ENCODE measurements at regions of chr7 and their contacts with region 1.

Region 1: GRCh38 chr7:33685981-33686683 is 219.2 kb upstream of the BMPER start:
- DNase-seq: no peak
- H3K4me3 ChIP-seq: no peak overlapping the region
- H3K27ac ChIP-seq: no peak overlapping the region
- H3K4me1 ChIP-seq: no peaks in the 10 kb centered on the region
- H3K27me3 ChIP-seq: no peaks in the 10 kb centered on the region
- CTCF ChIP-seq: no peak; the same call in 1 of the 2 replicates

Region 2: GRCh38 chr7:33143996-33144718 is 542.0 kb before region 1 on chr7:
- CTCF ChIA-PET with region 1: no interaction called
- POLR2A ChIA-PET with region 1: no interaction called
- intact Hi-C with region 1: no loop called
- DNase-seq: no peak
- H3K4me3 ChIP-seq: no peak overlapping the region
- H3K27ac ChIP-seq: no peak overlapping the region
- H3K4me1 ChIP-seq: no peaks in the 10 kb centered on the region
- H3K27me3 ChIP-seq: no peaks in the 10 kb centered on the region
- CTCF ChIP-seq: no peak

Region 3: GRCh38 chr7:33509206-33509605 is 176.9 kb before region 1 on chr7:
- CTCF ChIA-PET with region 1: interaction called, 11 read pairs
- POLR2A ChIA-PET with region 1: no interaction called
- intact Hi-C with region 1: no loop called
- DNase-seq: no peak
- H3K4me3 ChIP-seq: no peak overlapping the region
- H3K27ac ChIP-seq: no peak overlapping the region
- H3K4me1 ChIP-seq: no peaks in the 10 kb centered on the region
- H3K27me3 ChIP-seq: no peaks in the 10 kb centered on the region
- CTCF ChIP-seq: no peak

Region 4: GRCh38 chr7:33716581-33717477 is 30.7 kb after region 1 on chr7:
- CTCF ChIA-PET with region 1: no interaction called
- POLR2A ChIA-PET with region 1: no interaction called
- intact Hi-C with region 1: no loop called
- DNase-seq: peak; percentile 61
- H3K4me3 ChIP-seq: no peak overlapping the region
- H3K27ac ChIP-seq: no peak overlapping the region
- H3K4me1 ChIP-seq: peaks cover 4% of the 10 kb centered on the region
- H3K27me3 ChIP-seq: no peaks in the 10 kb centered on the region
- CTCF ChIP-seq: peak; percentile 75

Region 5: GRCh38 chr7:33895025-33895804 is 209.1 kb after region 1 on chr7:
- CTCF ChIA-PET with region 1: no interaction called
- POLR2A ChIA-PET with region 1: no interaction called
- intact Hi-C with region 1: no loop called
- DNase-seq: peak; percentile 89
- H3K4me3 ChIP-seq: no peak overlapping the region
- H3K27ac ChIP-seq: no peak overlapping the region
- H3K4me1 ChIP-seq: no peaks in the 10 kb centered on the region
- H3K27me3 ChIP-seq: no peaks in the 10 kb centered on the region
- CTCF ChIP-seq: peak; percentile 95

Measured in A673 (cell line).